Activated CD8-positive, alpha-beta T cell treated with anti-CD3 and anti-CD28 coated beads for 36 hours (primary cell): ENCODE measurements at regions of chr9 and their contacts with region 1.

Region 1: DNA sequence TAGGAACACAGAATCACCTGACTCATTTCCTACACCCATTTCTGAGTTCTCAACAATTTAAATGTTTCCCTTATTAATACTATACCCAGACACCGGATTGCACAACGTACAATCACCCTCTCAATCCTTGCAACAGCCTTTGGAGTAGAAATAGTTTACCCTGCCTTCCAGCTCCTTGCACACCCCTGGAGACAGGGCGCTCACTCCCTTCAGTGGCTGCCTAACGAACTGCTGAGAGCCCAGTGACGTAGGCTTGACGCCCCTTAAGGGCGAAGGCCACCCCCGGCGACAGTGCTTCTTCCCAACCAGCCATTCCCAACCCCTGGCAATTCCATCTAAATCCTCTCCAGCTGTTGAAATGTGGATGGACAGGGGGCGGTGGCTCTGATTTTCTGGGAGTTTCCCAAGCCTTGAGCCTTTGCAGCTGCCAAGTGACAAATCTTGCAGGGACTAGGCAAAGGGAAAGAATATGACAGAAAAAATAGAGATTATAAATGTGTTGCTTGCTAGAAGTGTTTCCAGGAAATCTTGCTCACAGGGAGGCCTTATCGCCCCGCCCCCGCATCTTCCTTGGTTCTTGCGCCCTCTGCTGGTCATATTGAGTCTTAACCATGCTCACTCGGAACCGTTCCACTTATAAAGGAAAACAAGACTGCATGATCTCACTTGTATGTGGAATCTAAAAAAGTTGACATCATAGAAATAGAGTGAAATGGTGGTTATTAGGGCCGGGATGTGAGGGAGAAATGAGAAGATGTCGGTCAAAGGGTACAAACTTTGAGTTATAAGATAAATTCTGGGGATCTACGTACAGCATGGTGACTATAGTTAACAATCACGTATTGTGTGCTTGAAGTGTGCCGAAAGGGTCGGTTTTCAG is 7.6 kb upstream of the BARX1 start:
- DNase-seq: peak; percentile 92
- ATAC-seq: peak; percentile 59
- H3K4me3 Mint-ChIP-seq: no peak overlapping the region
- H3K27ac Mint-ChIP-seq: no peak overlapping the region
- H3K4me1 Mint-ChIP-seq: peaks cover 27% of the 10 kb centered on the region
- H3K27me3 Mint-ChIP-seq: peaks cover 47% of the 10 kb centered on the region
- CTCF ChIP-seq: peak; percentile 70

Region 2: GRCh38 chr9:93682232-93682968 is 280.4 kb before region 1 on chr9:
- CTCF ChIA-PET with region 1: interaction called, 37 read pairs
- POLR2A ChIA-PET with region 1: interaction called, 3 read pairs
- intact Hi-C with region 1: loop called (anchors 2 kb)
- DNase-seq: peak; percentile 78
- ATAC-seq: peak; percentile 79
- H3K4me3 Mint-ChIP-seq: no peak overlapping the region
- H3K27ac Mint-ChIP-seq: no peak overlapping the region
- H3K4me1 Mint-ChIP-seq: no peaks in the 10 kb centered on the region
- H3K27me3 Mint-ChIP-seq: no peaks in the 10 kb centered on the region
- CTCF ChIP-seq: peak; percentile 85

Region 3: DNA sequence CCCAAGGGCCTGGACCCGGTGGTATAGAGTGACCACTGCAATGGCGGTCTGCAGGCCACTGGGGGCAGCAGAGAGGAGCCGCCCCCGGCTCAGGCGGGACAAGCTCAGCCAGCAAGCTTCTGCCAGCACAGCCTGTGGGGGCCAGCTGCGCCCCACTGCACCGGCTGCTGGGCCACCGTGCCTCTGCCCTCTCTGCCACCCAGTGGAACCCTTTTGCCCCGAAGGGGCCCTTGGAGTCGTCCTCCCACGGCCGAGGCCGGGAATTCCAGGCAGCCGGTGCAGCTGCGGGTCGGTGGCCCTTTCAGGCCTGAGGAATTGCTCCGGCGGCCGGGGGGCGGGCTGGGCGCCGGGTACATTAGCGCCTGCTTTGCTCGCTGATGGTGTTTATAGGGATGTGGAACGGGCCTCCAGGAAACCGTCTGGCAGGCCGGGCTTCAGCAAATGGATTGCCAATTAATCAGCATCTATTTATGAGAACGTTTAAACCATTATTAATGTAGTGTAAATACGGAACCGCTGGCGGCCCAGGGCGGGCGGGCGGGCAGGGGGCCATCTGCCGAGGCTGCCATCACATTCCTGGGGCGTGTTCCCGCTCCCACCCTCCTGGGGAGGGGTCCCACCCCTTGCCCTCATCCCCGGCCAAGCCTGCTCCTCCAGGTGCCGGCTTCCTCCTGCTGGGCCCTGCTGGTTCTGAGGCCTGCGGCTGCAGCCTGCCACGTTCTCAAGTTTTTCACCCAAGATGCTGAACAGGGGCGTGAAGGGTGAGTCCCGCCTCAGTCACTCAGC is 135.1 kb before region 1 on chr9:
- CTCF ChIA-PET with region 1: interaction called, 14 read pairs
- POLR2A ChIA-PET with region 1: no interaction called
- intact Hi-C with region 1: loop called (anchors 2 kb)
- DNase-seq: peak; percentile 53
- ATAC-seq: peak; percentile 94
- H3K4me3 Mint-ChIP-seq: no peak overlapping the region
- H3K27ac Mint-ChIP-seq: no peak overlapping the region
- H3K4me1 Mint-ChIP-seq: peaks cover 7% of the 10 kb centered on the region
- H3K27me3 Mint-ChIP-seq: peaks cover 29% of the 10 kb centered on the region
- CTCF ChIP-seq: peak; percentile 75

Region 4: DNA sequence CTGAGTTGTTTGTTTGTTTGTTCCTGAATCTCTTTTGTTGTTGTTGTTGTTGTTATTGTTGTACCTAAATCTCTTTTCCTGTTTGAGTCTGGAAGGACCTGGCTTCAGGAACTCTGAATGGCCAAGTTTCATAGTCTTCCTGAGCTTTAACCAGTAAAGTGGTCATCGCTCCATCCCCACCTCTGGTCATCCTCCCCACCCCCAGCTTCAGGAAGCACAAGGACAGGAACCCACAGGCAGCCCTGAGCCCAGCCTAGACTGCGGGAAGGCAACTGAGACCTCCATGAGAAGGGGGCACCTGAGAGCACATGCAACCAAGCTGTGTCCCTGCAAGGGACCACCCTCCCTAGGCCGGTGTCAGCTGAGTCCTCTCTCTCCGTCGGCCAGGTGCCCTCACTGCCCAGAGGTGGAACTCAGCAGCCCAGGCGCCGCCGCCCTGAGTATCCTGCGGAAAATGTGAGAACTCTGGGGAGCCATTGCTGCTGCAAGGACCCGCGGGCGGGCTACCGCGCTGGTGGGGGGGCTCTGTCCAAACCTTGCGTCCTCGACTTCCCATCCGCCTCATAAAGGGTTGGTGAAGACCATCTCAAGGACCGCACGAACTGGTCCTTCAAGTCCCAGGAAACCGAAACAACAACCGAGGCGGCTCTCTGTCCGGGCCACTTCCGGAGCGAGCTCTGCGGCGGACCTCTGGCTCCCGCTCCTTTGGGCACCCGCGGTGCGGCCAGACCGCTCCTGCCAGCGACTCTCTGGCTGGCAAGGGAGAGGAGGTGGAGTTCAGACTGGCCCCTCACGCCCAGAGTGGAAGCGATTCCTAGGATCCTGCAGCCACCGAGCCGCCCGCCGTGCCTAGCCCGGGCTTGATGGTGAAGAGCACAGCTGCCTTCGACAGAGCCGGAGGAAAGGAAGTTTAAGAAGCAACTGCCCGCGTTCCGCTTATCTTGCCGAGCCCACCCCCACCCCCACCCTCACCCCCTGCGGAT is 11.9 kb before region 1 on chr9:
- CTCF ChIA-PET with region 1: interaction called, 31 read pairs
- POLR2A ChIA-PET with region 1: interaction called, 4 read pairs
- intact Hi-C with region 1: no loop called
- DNase-seq: peak; percentile 20
- ATAC-seq: no peak
- H3K4me3 Mint-ChIP-seq: peak overlapping the region; percentile 54
- H3K27ac Mint-ChIP-seq: no peak overlapping the region
- H3K4me1 Mint-ChIP-seq: peaks cover 47% of the 10 kb centered on the region
- H3K27me3 Mint-ChIP-seq: peaks cover 78% of the 10 kb centered on the region
- CTCF ChIP-seq: no peak

Region 5: GRCh38 chr9:93984860-93985259 is 22.1 kb after region 1 on chr9:
- CTCF ChIA-PET with region 1: no interaction called
- POLR2A ChIA-PET with region 1: no interaction called
- intact Hi-C with region 1: no loop called
- DNase-seq: no peak
- ATAC-seq: no peak
- H3K4me3 Mint-ChIP-seq: no peak overlapping the region
- H3K27ac Mint-ChIP-seq: no peak overlapping the region
- H3K4me1 Mint-ChIP-seq: no peaks in the 10 kb centered on the region
- H3K27me3 Mint-ChIP-seq: peaks cover 23% of the 10 kb centered on the region
- CTCF ChIP-seq: no peak